Activated CD8-positive, alpha-beta memory T cell treated with anti-CD3 and anti-CD28 coated beads, Interleukin-2, amount 10 ng/mL, durations not matched to agents 7 days and 5 days (primary cell): ENCODE measurements at regions of chr1 and their contacts with region 1.

Region 1: GRCh38 chr1:58699011-58699762 is 675 bp downstream of the MYSM1 start:
- DNase-seq: no peak
- ATAC-seq: peak; percentile 20
- H3K4me3 Mint-ChIP-seq: peak overlapping the region; percentile 91
- H3K27ac Mint-ChIP-seq: peak overlapping the region; percentile 91
- H3K4me1 Mint-ChIP-seq: peaks cover 18% of the 10 kb centered on the region
- H3K27me3 Mint-ChIP-seq: no peaks in the 10 kb centered on the region

Region 2: DNA sequence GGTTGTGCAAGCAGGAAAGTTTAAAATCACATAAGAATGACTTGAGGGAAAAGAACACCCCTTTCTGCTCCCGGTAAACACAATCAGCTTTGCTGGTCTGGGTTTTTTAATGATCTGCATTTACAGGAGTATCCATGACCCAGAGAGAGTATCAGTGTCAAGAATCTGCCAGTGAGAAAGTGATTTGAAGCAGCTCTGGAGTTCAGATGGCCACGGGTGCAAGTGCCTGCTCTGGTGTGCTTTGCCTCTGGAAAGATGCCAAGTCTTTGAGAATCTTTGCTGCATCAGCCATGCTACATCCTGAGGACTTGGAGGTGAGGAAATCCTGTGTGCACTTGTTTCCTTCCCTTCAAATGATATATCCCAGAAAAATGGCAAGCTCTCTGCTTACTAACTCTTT is 19.2 kb after region 1 on chr1:
- CTCF ChIA-PET with region 1: interaction called, 11 read pairs
- DNase-seq: no peak
- ATAC-seq: peak; percentile 51
- H3K4me3 Mint-ChIP-seq: peak overlapping the region; percentile 52
- H3K27ac Mint-ChIP-seq: peak overlapping the region; percentile 93
- H3K4me1 Mint-ChIP-seq: peaks cover 43% of the 10 kb centered on the region
- H3K27me3 Mint-ChIP-seq: no peaks in the 10 kb centered on the region